HCT116 (cell line): ENCODE measurements at regions of chr20 and their contacts with region 1.

Region 1: DNA sequence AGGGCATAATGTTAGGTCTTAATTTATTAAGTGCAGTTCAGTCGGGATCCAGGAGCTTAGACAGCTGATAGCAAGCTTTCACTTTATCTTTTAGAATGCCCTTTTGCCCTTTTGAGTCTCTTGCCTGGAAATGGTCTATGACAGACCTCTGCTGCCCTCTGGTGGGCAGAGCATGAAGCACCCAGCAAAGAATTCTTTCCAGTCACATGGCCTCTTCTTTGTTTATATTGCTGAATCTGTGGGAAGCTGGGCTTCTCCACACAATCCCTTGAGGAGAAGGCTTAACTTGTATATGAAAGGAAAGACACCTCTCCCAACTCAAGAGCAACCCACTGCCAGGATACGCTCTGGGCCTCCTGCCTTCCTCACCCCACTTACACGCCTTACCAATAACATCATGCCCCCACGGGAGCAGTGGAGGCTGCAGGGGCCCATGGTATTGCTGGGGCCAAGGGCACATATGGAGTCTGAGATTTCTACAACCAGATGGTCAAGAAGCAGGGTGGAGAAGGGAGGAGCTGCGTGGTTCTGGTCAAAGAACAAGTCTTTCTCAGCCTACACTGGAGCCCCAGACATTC is 20.4 kb downstream of the WFDC3 start:
- DNase-seq: peak; percentile 61
- ATAC-seq: peak; percentile 87
- H3K4me3 ChIP-seq: no peak overlapping the region
- H3K27ac ChIP-seq: no peak overlapping the region; the same call in 1 of the 2 replicates
- H3K4me1 ChIP-seq: peaks cover 2 to 19% of the 10 kb centered on the region in 2 experiments; a peak in 1 of 4 replicates
- H3K27me3 ChIP-seq: no peaks in the 10 kb centered on the region; the same call in 1 of the 2 replicates
- CTCF ChIP-seq: peak; percentile 84 to 97 (median 96)
- POLR2A ChIP-seq: no peak
- RAD21 ChIP-seq: peak; percentile 99

Region 2: GRCh38 chr20:45044084-45044573 is 727.1 kb before region 1 on chr20:
- CTCF ChIA-PET with region 1: no interaction called
- POLR2A ChIA-PET with region 1: no interaction called
- RAD21 ChIA-PET with region 1: no interaction called
- intact Hi-C with region 1: loop called (anchors 10 kb)
- DNase-seq: peak; percentile 57
- ATAC-seq: peak; percentile 80
- H3K4me3 ChIP-seq: no peak overlapping the region
- H3K27ac ChIP-seq: no peak overlapping the region
- H3K4me1 ChIP-seq: peaks cover 14 to 19% of the 10 kb centered on the region in 2 experiments
- H3K27me3 ChIP-seq: no peaks in the 10 kb centered on the region
- CTCF ChIP-seq: peak; percentile 76 to 89 (median 83)
- POLR2A ChIP-seq: no peak
- RAD21 ChIP-seq: peak; percentile 84

Region 3: GRCh38 chr20:45362804-45363610 is 408.3 kb before region 1 on chr20 and contains the start of gene SYS1:
- CTCF ChIA-PET with region 1: interaction called, 11 read pairs
- POLR2A ChIA-PET with region 1: no interaction called
- RAD21 ChIA-PET with region 1: no interaction called
- intact Hi-C with region 1: no loop called
- DNase-seq: peak; percentile 96
- ATAC-seq: peak; percentile 85
- H3K4me3 ChIP-seq: peak within 1 kb of the TSS; percentile 72 to 98
- H3K27ac ChIP-seq: peak within 1 kb of the TSS; percentile 80
- H3K4me1 ChIP-seq: peaks cover 40 to 50% of the 10 kb centered on the region in 2 experiments
- H3K27me3 ChIP-seq: no peaks in the 10 kb centered on the region
- CTCF ChIP-seq: peak; percentile 73 to 83 (median 79)
- POLR2A ChIP-seq: peak; percentile 76
- RAD21 ChIP-seq: peak; percentile 80
- total RNA-seq, gene SYS1: 20.5 TPM

Region 4: DNA sequence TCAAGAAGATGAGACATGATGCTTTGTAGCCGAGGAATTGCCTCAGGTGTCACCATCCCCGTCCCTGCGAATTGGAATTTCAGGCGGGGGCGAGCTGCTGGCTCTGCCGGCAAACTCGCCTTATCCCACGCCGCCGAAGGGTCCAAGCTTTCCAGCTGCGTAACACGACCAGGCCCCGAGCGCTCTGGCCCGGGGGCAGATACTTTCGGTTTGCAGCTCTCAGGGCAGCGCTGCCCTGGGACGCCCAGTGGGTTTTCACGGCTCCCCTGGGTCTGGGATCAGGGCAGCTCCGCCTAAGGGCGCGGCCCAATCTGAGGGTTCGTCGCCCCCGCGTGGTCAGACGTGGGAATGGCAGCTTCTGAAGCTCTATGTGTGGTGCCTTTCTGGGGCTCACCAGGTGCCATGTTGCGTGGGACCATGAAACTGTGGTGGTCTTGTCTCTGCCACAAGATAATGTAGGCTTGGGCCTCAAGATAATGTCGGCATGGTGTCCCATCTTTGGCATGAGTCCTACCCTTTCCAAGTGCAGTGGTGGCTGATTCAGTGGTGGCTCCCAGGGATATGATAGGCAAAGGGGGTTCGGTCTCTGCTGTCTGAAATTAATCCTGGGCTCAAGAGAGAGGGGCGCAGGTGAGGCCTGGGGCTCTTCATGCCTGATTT is 334.4 kb before region 1 on chr20:
- CTCF ChIA-PET with region 1: interaction called, 22 read pairs
- POLR2A ChIA-PET with region 1: no interaction called
- RAD21 ChIA-PET with region 1: no interaction called
- intact Hi-C with region 1: no loop called
- DNase-seq: peak; percentile 63
- ATAC-seq: peak; percentile 99
- H3K4me3 ChIP-seq: peak overlapping the region; percentile 57 to 67
- H3K27ac ChIP-seq: no peak overlapping the region
- H3K4me1 ChIP-seq: peaks cover 0 to 12% of the 10 kb centered on the region in 2 experiments; a peak in 2 of 4 replicates
- H3K27me3 ChIP-seq: no peaks in the 10 kb centered on the region
- CTCF ChIP-seq: peak; percentile 90 to 94 (median 93)
- POLR2A ChIP-seq: no peak
- RAD21 ChIP-seq: peak; percentile 97

Region 5: DNA sequence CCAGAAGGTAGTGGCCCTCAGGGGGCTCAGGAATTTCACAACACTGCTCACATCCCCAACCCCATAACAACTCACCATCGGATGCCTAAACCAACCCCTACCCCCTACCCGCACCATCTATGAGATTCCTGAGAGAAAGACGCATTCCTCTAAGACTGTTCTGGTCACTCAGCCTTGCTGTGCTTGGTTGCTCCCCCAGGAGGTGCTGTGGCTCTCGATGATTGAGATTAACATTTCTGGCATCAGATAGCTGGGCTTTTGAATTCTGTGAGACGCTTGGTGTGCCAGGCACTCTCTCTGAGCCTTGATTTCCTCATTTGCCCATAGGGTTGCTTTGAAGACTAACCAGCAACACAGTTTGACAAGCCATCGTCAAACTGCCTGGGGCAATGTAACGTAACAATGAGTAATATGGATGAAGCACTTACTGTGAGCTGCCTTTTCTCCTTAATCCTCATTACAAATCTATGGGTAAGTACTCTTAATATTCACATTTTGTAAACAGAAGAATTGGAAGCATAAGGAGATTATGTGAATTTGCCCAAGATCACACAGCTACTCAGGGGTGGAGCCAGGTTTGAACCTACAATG is 233.0 kb before region 1 on chr20:
- CTCF ChIA-PET with region 1: interaction called, 13 read pairs
- POLR2A ChIA-PET with region 1: no interaction called
- RAD21 ChIA-PET with region 1: no interaction called
- intact Hi-C with region 1: no loop called
- DNase-seq: no peak
- ATAC-seq: no peak
- H3K4me3 ChIP-seq: no peak overlapping the region
- H3K27ac ChIP-seq: no peak overlapping the region
- H3K4me1 ChIP-seq: no peaks in the 10 kb centered on the region
- H3K27me3 ChIP-seq: peaks cover 65% of the 10 kb centered on the region
- CTCF ChIP-seq: peak in 2 of 3 experiments; percentile 36 to 42; a peak in 4 of 6 replicates
- POLR2A ChIP-seq: no peak
- RAD21 ChIP-seq: no peak

Region 6: DNA sequence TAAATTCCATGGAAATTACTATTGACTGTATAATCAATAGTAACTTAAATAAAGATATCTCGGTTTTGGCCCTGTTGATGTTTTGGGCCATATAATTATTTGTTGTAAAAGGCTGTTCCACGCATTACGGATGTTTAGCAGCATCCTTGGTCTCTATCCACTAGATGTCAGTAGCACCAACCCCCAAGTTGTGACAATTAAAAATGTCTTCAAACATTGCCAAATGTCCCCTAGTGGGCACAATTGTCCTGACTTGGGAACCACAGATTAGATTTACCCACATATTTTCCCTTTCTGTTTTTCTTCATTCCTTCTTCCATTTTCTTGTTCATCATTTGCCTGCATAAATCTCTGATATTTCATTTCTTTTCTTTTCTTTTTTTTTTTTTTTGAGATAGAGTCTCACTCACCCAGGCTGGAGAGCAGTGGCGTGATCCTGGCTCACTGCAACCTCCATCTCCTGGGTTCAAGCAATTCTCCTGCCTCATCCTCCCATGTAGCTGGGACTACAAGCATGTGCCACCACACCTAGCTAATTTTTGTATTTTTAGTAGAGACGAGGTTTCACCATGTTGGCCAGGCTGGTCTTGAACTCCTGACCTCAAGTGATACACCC is 178.6 kb before region 1 on chr20:
- CTCF ChIA-PET with region 1: interaction called, 16 read pairs
- POLR2A ChIA-PET with region 1: no interaction called
- RAD21 ChIA-PET with region 1: interaction called in 1 of 2 experiments, 3 read pairs
- intact Hi-C with region 1: loop called (anchors 1 kb)
- DNase-seq: peak; percentile 83
- ATAC-seq: peak; percentile 93
- H3K4me3 ChIP-seq: no peak overlapping the region
- H3K27ac ChIP-seq: no peak overlapping the region
- H3K4me1 ChIP-seq: peaks cover 0 to 7% of the 10 kb centered on the region in 2 experiments; a peak in 2 of 4 replicates
- H3K27me3 ChIP-seq: no peaks in the 10 kb centered on the region; the same call in 1 of the 2 replicates
- CTCF ChIP-seq: peak; percentile 92 to 99 (median 97)
- POLR2A ChIP-seq: no peak
- RAD21 ChIP-seq: peak; percentile 94

Region 7: DNA sequence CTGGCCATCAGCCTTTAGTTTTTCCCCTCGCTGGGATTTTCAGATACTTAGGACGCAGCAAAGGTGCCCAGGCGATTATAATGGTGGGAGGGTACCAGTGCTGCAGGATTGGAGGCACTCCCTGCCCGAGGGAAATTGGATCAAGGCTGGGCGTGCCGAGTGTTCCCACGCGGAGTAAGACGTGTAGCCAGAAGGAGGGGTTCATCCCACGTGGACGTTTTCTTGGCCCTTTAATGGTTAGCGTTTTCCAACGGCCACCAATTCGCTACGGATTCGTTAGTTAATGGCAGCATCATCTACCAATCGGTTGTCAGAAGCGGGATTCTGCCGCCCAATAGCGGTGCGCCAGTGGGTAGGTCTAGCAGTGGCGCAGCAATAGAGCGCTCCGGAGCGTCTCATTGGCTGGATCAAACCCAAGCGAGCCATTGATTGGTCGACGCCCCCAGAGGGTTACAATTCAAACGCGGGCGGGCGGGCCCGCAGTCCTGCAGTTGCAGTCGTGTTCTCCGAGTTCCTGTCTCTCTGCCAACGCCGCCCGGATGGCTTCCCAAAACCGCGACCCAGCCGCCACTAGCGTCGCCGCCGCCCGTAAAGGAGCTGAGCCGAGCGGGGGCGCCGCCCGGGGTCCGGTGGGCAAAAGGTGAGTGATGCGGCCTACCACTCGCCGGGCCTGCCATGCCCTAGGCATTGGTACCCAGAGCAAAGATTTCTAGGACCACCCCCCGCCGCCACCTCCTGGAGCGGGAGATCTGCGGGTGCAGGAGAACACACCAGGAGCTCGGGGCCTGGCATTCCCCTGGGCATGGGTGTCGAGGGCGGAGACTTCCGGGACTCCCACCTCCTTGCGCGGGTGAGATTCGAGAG is 41.1 kb after region 1 on chr20 and contains the start of gene UBE2C:
- CTCF ChIA-PET with region 1: no interaction called
- POLR2A ChIA-PET with region 1: no interaction called
- RAD21 ChIA-PET with region 1: no interaction called
- intact Hi-C with region 1: no loop called
- DNase-seq: peak; percentile 100
- ATAC-seq: peak; percentile 97
- H3K4me3 ChIP-seq: peak within 1 kb of the TSS; percentile 85 to 100
- H3K27ac ChIP-seq: peak within 1 kb of the TSS; percentile 93
- H3K4me1 ChIP-seq: peaks cover 21 to 31% of the 10 kb centered on the region in 2 experiments; a peak in 3 of 4 replicates
- H3K27me3 ChIP-seq: no peaks in the 10 kb centered on the region
- CTCF ChIP-seq: no peak
- POLR2A ChIP-seq: peak; percentile 26
- RAD21 ChIP-seq: no peak
- total RNA-seq, gene UBE2C: 205 TPM

Region 8: DNA sequence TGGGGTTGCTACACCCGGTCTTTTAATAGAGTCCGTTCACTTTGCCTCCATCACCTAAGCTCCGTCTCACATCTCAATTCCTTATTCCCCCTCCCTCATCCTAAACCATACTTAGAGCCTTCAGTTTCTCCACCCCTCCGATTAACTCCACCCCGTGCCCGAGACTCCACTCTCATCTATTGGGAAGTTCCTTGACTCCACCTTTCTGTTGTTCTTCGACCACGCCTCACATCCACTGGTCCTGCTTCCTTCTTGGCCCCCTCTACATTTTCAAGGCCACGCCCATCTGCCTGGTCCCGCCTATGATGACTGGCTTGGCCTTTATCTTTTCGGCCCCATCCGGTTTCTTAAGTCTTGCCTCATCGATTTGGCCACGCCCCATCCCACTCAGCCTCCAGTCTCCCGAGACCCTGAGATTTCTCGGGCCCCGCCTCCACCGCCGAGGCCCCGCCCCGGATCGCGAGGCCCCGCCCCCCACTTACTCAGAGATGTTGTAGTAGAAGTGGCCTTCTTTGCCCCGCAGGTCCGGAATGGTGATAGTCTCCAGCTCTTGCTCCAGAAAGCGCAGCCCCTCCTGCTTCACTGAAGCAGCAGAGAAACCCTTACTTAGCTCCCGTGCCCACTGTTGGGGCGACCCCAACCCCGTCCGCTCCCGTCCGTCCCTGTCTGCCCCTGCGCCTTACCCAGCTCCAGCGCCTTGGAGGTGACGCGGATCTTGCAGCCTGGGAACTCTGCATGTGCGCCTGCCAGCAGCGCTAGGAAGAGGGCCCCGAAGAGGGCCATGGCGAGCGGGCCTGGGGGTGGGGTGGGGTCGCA is 139.6 kb after region 1 on chr20:
- CTCF ChIA-PET with region 1: no interaction called
- POLR2A ChIA-PET with region 1: no interaction called
- RAD21 ChIA-PET with region 1: no interaction called
- intact Hi-C with region 1: no loop called
- DNase-seq: peak; percentile 96
- ATAC-seq: peak; percentile 94
- H3K4me3 ChIP-seq: 0 out of 4 replicates have a peak overlapping the region, but pooled peaks of 1 of the 2 experiments have one; percentile 9
- H3K27ac ChIP-seq: no peak overlapping the region
- H3K4me1 ChIP-seq: peaks cover 1 to 19% of the 10 kb centered on the region in 2 experiments
- H3K27me3 ChIP-seq: no peaks in the 10 kb centered on the region
- CTCF ChIP-seq: no peak
- POLR2A ChIP-seq: no peak
- RAD21 ChIP-seq: no peak